ENCODE measurements at regions of chrX and their contacts with region 1.

Region 1: DNA sequence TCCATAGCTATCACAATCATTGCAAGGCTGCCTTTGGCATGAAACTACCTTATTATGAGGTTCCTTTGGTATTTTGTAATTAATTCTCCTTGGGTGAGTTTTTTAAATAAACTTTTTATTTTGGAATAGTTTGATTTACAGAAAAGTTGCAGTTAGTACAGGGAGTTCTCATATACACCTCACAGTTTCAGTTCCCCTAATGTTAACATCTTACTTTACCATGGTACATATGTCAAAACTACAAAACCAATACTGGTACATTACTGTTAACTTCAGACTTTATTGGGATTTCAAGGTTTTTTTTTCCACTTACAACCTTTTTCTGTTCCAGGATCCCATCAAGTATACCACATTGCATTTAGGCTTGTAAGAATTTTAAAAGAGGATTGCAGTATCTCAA is 52.0 kb upstream of the RGN start:
- DNase-seq: no peak
- H3K4me3 ChIP-seq: no peak overlapping the region
- CTCF ChIP-seq: no peak
- POLR2A ChIP-seq: no peak

Region 2: GRCh38 chrX:46903458-46904242 is 122.5 kb before region 1 on chrX:
- intact Hi-C with region 1: loop called (anchors 10 kb)
- DNase-seq: peak; percentile 54 to 94
- H3K4me3 ChIP-seq: no peak overlapping the region
- CTCF ChIP-seq: no peak
- POLR2A ChIP-seq: no peak

Measured in lower leg skin (tissue), 4 donors.